Gastrocnemius medialis (tissue), 4 donors: ENCODE measurements at regions of chr2 and their contacts with region 1.

Region 1: GRCh38 chr2:98385050-98385699 is 38.9 kb downstream of the CNGA3 start:
- DNase-seq: peak; percentile 22 to 43
- ATAC-seq: peak; percentile 56 to 92
- H3K4me3 ChIP-seq: no peak overlapping the region
- H3K27ac ChIP-seq: no peak overlapping the region
- H3K4me1 ChIP-seq: peaks cover 0 to 7% of the 10 kb centered on the region in 2 donors
- H3K27me3 ChIP-seq: no peaks in the 10 kb centered on the region
- CTCF ChIP-seq: peak; percentile 78 to 92 (median 81)
- POLR2A ChIP-seq: no peak

Region 2: GRCh38 chr2:97812931-97813330 is 572.2 kb before region 1 on chr2:
- in situ Hi-C with region 1: loop called in 3 of 4 experiments (anchors 10 kb)
- intact Hi-C with region 1: no loop called
- DNase-seq: no peak
- ATAC-seq: no peak
- H3K4me3 ChIP-seq: no peak overlapping the region
- H3K27ac ChIP-seq: no peak overlapping the region
- H3K4me1 ChIP-seq: peaks cover 0 to 6% of the 10 kb centered on the region in 2 donors
- H3K27me3 ChIP-seq: no peaks in the 10 kb centered on the region
- CTCF ChIP-seq: no peak
- POLR2A ChIP-seq: no peak